ENCODE measurements at regions of chr16 and their contacts with region 1.

Region 1: DNA sequence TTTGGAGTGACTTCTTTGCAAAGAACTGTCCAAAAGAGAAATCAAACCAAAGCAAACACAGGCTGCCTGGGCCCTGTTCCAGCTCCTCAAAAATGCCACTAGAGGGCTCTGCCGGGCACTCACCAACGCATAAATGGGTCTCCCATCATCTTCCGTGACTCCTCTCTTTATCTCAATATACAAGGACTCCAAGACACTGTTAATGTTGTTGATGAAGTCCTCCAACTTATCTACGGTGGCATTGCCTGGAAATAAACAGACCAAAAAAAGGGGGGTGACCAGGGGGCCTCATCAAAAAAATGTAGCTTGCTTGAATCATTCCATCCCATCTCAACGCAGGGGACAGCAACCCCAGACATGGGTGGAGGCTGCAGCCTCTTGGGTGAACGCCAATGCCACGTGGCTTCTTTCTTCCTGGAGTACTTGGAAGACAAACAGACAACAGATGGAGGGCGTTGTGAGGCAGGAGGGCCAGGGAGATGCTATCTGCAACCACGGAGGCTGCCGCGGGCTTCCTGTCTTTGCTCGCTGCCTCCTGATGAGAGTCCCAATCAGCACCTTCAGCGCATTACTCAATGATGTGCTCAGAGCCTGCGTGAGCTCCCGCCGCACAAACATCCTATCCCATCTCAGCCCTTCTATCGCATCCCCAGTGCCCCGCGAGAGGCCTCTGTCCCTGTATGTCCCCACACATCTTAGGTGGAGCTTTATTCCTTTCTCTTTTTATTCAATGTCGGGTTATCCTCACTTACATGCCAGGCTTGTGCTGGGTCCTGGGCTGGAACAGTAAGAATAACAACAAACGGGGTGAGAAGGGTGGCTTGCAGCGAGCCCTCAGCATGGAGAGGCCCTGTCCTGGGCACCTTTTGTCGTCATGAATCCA is 32.0 kb downstream of the KDM8 start:
- DNase-seq: peak; percentile 97
- ATAC-seq: peak; percentile 67
- H3K4me3 Mint-ChIP-seq: peak overlapping the region; percentile 62
- H3K27ac Mint-ChIP-seq: peak overlapping the region; percentile 94
- H3K4me1 Mint-ChIP-seq: peaks cover 88% of the 10 kb centered on the region
- H3K27me3 Mint-ChIP-seq: no peaks in the 10 kb centered on the region

Region 2: GRCh38 chr16:27169511-27170071 is 65.7 kb before region 1 on chr16:
- CTCF ChIA-PET with region 1: interaction called, 16 read pairs
- DNase-seq: peak; percentile 87
- ATAC-seq: peak; percentile 86
- H3K4me3 Mint-ChIP-seq: peak overlapping the region; percentile 59
- H3K27ac Mint-ChIP-seq: peak overlapping the region; percentile 82
- H3K4me1 Mint-ChIP-seq: peaks cover 45% of the 10 kb centered on the region
- H3K27me3 Mint-ChIP-seq: no peaks in the 10 kb centered on the region

Region 3: GRCh38 chr16:27222249-27223225 is 12.8 kb before region 1 on chr16:
- CTCF ChIA-PET with region 1: interaction called, 13 read pairs
- DNase-seq: no peak
- ATAC-seq: no peak
- H3K4me3 Mint-ChIP-seq: no peak overlapping the region
- H3K27ac Mint-ChIP-seq: no peak overlapping the region
- H3K4me1 Mint-ChIP-seq: peaks cover 22% of the 10 kb centered on the region
- H3K27me3 Mint-ChIP-seq: no peaks in the 10 kb centered on the region

Region 4: DNA sequence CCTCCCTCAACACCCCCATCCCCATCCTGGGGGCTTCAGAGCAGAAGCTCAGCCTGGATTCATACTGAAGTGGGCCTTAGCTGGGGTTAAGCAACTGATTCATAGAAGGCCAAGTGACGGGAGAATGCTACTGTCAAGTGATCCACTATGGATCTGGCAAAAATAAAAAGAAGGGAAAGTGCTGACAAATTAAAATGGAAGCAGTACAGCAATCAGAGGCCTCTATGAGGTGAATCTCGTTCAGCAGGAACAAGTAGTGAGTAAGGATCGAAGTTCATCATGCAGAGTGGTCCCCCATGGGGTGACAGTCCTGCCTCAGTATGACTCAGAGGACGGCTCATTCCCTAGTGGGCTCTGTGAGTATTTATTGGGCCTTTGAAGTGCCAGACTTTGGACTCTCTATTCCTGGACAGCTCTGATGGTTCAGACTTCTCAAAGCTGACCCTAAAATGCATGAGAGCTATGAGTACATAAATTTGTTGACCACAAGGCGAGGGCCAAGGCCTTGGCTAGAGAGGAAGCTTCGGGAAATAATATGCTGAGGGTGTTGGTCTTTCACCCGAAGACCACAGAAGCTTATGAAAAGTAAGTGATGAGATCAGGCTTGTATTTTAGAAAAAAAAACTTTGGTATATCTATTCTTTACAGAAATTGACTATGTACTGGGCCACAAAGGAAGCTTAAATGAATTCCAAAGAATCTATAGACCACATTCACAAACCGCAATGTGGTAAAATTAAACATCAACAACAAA is 38.6 kb after region 1 on chr16:
- CTCF ChIA-PET with region 1: interaction called, 33 read pairs
- DNase-seq: peak; percentile 68
- ATAC-seq: peak; percentile 81
- H3K4me3 Mint-ChIP-seq: peak overlapping the region; percentile 32
- H3K27ac Mint-ChIP-seq: peak overlapping the region; percentile 90
- H3K4me1 Mint-ChIP-seq: peaks cover 58% of the 10 kb centered on the region
- H3K27me3 Mint-ChIP-seq: no peaks in the 10 kb centered on the region

Region 5: DNA sequence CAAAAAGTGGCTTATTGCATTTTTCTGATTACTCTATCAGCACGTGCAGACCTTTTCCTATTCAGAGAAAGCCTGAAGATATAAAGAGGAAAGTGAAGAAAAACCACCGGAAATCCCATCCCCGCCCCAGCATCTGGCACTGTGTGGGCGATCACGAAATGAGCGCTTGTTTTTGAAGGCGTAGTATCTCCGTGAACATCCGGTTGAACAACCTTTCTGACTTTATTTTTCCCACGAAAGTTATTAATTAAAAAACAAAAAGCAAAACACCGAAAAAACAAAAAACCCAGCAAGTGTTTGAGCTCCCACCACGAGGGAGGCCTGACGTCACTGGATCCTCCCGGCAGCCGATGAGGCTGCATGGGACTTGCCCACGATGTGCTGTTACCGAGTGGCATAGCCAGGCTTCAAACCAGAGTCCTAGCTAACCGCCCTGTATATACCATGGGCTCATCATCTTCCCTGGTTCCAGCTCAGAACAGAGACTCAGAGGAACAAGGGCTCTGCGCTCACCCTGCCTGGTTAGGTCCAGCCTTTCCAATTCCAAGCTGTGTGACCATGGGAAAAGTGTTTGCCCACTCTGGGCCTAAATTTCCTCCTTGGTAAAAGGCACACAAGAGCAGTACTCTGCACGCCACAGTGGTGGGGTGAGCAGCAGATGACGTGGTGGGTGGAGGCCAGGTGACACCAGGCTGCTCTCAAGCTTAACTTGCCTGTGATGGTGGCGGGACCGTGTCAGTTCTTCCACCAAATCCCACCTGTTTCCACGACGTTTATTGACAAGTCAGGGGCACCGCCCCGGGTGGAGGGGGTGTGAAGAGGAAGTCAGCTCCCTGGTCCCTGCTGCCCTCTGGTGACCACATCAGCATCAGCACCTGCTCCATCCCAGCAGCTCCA is 132.4 kb after region 1 on chr16:
- CTCF ChIA-PET with region 1: interaction called, 92 read pairs
- DNase-seq: peak; percentile 92
- ATAC-seq: peak; percentile 83
- H3K4me3 Mint-ChIP-seq: peak overlapping the region; percentile 49
- H3K27ac Mint-ChIP-seq: peak overlapping the region; percentile 95
- H3K4me1 Mint-ChIP-seq: peaks cover 36% of the 10 kb centered on the region
- H3K27me3 Mint-ChIP-seq: no peaks in the 10 kb centered on the region

Region 6: DNA sequence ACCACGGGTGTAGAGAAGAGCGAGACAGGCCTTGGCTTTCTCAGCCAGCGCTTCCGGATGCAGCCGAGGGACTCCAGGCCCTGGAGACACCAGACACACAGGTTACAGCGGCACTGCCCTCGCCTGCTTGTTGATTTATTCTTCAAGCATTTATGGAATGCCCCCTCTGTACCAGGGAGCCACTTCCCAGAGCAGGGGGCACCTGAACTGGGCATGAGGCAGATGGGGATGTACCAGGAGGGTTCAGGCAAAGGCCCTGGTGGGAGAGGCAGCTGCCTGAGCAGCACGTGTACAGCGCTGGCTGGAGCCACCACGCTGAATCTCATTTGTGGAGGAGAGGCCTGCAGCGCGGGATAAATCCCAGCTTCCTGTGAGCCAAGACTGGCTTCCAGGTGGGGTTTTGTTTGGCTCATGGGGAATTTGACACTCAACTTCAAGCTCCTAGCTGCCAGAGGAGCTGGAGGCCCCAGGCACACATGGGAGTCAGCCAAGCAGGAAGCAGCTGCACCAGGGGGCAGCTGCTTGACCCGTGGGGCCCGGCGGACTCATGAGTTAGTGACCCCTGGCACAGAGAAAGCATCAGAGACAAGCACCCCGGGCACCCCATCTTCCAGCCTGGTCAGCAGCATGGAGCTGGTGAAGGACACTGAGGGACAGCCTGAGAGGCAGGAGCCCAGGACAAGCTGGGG is 226.3 kb after region 1 on chr16:
- CTCF ChIA-PET with region 1: interaction called, 15 read pairs
- DNase-seq: no peak
- ATAC-seq: no peak
- H3K4me3 Mint-ChIP-seq: no peak overlapping the region
- H3K27ac Mint-ChIP-seq: peak overlapping the region; percentile 41
- H3K4me1 Mint-ChIP-seq: peaks cover 34% of the 10 kb centered on the region
- H3K27me3 Mint-ChIP-seq: no peaks in the 10 kb centered on the region